Activated naive CD4-positive, alpha-beta T cell treated with anti-CD3 and anti-CD28 coated beads, Interleukin-2, amount 10 ng/mL, durations not matched to agents 7 days and 5 days (primary cell): ENCODE measurements at regions of chr2 and their contacts with region 1.

Region 1: DNA sequence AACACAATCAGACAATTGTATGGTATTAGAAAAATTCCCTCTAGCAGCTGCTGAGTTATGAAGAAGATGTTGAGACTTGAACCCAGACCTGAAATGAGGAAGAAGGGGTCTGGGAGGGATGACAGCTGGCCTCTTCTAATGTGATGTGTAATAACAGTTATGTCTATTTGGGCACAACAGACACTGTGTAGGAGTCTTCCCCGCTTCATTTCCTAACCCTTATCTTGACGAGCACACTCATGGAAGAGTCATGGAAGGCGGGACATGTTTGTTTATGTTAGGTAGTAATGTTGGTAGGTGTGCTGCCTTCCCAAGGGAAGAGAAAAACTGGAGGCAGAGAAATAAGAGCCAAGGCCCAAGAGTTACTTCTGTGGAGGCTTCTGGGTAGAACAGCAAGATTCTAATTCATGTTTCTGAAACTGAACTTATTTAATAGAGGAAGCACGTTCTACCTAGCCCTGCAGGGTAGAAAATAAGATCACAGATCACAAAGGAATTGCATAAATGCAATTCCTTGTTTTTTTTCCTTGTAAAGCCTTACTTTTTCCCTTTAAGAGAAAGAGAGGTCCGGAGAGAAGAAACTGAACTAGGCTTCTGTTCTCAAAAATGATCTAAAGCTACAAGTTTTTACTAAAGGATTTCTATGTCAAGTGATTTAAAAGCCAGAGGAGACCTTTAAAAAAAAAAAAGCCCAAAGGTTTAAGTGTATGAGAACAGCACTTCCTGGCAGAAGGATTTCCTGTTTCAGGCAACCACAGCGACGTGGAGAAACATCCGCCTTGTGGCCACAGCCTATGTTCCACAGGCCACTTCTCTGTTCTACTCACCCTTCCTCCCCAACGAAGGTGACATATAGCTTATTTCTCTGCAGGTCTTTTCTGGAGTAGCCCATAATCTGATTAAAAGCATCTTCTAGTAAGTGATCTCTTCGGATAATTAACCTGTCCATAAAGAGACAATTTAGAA is 68.5 kb upstream of the STK17B start:
- DNase-seq: peak; percentile 92
- H3K4me3 Mint-ChIP-seq: peak overlapping the region; percentile 35
- H3K27ac Mint-ChIP-seq: peak overlapping the region; percentile 87
- H3K4me1 Mint-ChIP-seq: peaks cover 87% of the 10 kb centered on the region
- H3K27me3 Mint-ChIP-seq: no peaks in the 10 kb centered on the region

Region 2: GRCh38 chr2:196259507-196260481 is 19.9 kb after region 1 on chr2:
- CTCF ChIA-PET with region 1: interaction called, 22 read pairs
- DNase-seq: peak; percentile 68
- H3K4me3 Mint-ChIP-seq: peak overlapping the region; percentile 79
- H3K27ac Mint-ChIP-seq: peak overlapping the region; percentile 97
- H3K4me1 Mint-ChIP-seq: peaks cover 76% of the 10 kb centered on the region
- H3K27me3 Mint-ChIP-seq: no peaks in the 10 kb centered on the region